Heart right ventricle (tissue), 16 donors: ENCODE measurements at regions of chr6 and their contacts with region 1.

Region 1: DNA sequence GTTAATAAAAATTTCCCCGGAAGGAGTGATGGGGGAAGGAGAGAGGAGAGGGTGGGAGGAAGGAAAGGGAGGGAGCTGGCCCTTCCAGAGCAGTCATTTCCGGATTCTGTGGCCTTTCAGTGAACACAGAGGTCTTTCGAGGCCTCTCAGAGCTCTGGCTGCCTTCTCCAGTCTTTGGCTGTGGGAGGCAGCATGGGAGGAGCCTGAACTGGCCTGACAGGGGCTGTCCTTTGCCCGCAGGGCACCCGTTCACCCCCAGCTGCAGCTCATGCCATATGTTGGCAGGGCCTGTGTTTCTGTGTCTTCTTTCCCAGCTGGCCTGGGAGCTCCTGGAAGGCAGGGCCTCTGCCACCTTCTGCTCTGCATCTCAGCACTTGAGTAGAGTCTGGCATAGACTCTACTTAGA is 95.5 kb downstream of the PPP1R14C start:
- DNase-seq: peak; percentile 59
- ATAC-seq: peak; percentile 75 to 97 (median 90)
- H3K4me3 ChIP-seq: no peak overlapping the region
- H3K27ac ChIP-seq: peak overlapping the region in 7 of 10 donors; percentile 25 to 73 (median 44)
- H3K4me1 ChIP-seq: peaks cover 3 to 35% (median 20%) of the 10 kb centered on the region in 9 donors
- H3K27me3 ChIP-seq: peaks cover 0 to 17% (median 0%) of the 10 kb centered on the region in 7 donors
- CTCF ChIP-seq: no peak

Region 2: DNA sequence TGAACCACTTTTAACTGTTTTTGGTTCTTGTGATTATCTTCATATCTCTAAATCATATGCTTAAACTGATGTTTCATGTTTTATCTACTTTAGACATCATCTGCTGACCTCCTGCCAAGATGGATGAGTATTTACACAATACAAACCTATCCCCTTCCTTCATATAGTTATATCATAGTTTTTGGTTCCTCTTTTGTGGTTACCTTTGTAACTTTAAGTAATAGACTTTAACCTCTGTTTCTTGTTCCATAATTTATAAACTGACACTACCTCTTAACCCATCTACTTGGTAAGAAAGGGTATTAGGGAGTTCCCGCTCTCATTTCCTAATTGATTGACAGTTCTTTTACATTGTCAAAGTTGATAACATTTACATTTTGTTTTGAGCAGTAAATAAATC is 476.9 kb before region 1 on chr6:
- intact Hi-C with region 1: no loop called
- DNase-seq: no peak
- ATAC-seq: no peak
- H3K4me3 ChIP-seq: no peak overlapping the region
- H3K27ac ChIP-seq: peak overlapping the region in 1 of 10 donors; percentile 11
- H3K4me1 ChIP-seq: peaks cover 0 to 53% (median 8%) of the 10 kb centered on the region in 9 donors
- H3K27me3 ChIP-seq: no peaks in the 10 kb centered on the region
- CTCF ChIP-seq: no peak

Region 3: GRCh38 chr6:150177952-150178520 is 60.3 kb before region 1 on chr6:
- intact Hi-C with region 1: loop called in 1 of 10 experiments (anchors 5 kb)
- DNase-seq: peak in 1 of 2 donors; percentile 44
- ATAC-seq: peak; percentile 32 to 80 (median 58)
- H3K4me3 ChIP-seq: no peak overlapping the region
- H3K27ac ChIP-seq: peak overlapping the region; percentile 75 to 96 (median 86)
- H3K4me1 ChIP-seq: peaks cover under 1 to 64% (median 20%) of the 10 kb centered on the region in 9 donors
- H3K27me3 ChIP-seq: no peaks in the 10 kb centered on the region
- CTCF ChIP-seq: no peak

Region 4: GRCh38 chr6:150417899-150418826 is 179.8 kb after region 1 on chr6:
- intact Hi-C with region 1: no loop called
- DNase-seq: peak in 1 of 2 donors; percentile 63
- ATAC-seq: peak in 7 of 8 donors; percentile 71 to 92 (median 88)
- H3K4me3 ChIP-seq: peak overlapping the region in 9 of 10 donors; percentile 11 to 52 (median 41)
- H3K27ac ChIP-seq: peak overlapping the region; percentile 24 to 90 (median 76)
- H3K4me1 ChIP-seq: peaks cover 0 to 30% (median 12%) of the 10 kb centered on the region in 9 donors
- H3K27me3 ChIP-seq: peaks cover 0 to 7% (median 0%) of the 10 kb centered on the region in 7 donors
- CTCF ChIP-seq: peak; percentile 59 to 91 (median 81)

Region 5: GRCh38 chr6:150448221-150448620 is 209.9 kb after region 1 on chr6:
- intact Hi-C with region 1: no loop called
- DNase-seq: no peak
- ATAC-seq: no peak
- H3K4me3 ChIP-seq: no peak overlapping the region
- H3K27ac ChIP-seq: no peak overlapping the region
- H3K4me1 ChIP-seq: peaks cover 0 to 13% (median 8%) of the 10 kb centered on the region in 9 donors
- H3K27me3 ChIP-seq: no peaks in the 10 kb centered on the region
- CTCF ChIP-seq: no peak